HepG2 (cell line): ENCODE measurements at regions of chr18 and their contacts with region 1.

Region 1: GRCh38 chr18:2571200-2572143 is at the starts of genes METTL4 and NDC80:
- DNase-seq: peak; percentile 85
- ATAC-seq: peak; percentile 91
- H3K4me3 ChIP-seq: peak within 1 kb of the TSS; percentile 82 to 89 (median 83)
- H3K27ac ChIP-seq: peak within 1 kb of the TSS; percentile 99
- H3K4me1 ChIP-seq: peaks cover 23% of the 10 kb centered on the region
- H3K27me3 ChIP-seq: no peaks in the 10 kb centered on the region; a peak in 1 of 5 replicates
- CTCF ChIP-seq: peak; percentile 38; the same call in 1 of the 2 replicates
- EP300 ChIP-seq: no peak
- POLR2A ChIP-seq: peak; percentile 65 to 71; a peak in 3 of 4 replicates
- RAD21 ChIP-seq: no peak
- total RNA-seq, gene METTL4: 6.8 and 8.4 TPM in 2 replicates
- total RNA-seq, gene NDC80: 33.0 and 47.0 TPM in 2 replicates

Region 2: DNA sequence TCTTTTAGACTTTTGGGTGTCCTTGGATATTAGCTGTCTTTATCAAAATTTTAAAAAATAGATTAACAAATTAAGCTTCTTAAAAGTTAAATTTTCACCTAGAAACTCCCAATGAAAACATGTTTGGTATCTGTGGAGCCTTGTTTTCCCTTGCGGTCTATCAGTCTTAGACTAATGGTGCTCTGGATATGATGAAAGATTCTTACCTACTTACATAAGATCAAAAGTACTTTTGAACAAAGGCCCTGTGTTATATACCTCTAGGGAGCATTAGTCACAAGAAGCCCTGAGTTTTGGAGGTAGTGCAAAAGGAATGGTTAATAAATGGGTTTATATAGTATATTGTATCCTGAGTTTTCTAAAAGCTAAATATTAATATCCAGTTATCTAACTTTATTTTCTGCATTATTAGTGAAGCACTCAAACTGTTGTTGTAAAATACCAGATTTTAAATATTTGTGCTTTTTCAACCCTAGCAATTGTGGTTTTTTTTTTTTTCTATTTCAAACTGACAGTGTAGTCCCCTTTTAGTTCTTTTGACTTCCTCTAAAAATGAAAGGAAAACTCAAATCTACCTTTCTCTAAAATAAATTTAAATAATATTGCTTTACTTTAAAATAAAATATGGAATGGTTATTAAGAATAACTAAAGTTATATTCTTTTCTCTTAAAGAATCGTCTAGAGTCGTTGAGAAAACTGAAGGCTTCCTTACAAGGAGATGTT is 18.0 kb after region 1 on chr18:
- CTCF ChIA-PET with region 1: no interaction called
- POLR2A ChIA-PET with region 1: no interaction called
- in situ Hi-C with region 1: no loop called
- intact Hi-C with region 1: loop called (anchors 2 kb)
- DNase-seq: peak; percentile 78
- ATAC-seq: peak; percentile 82
- H3K4me3 ChIP-seq: no peak overlapping the region; a peak in 1 of 6 replicates
- H3K27ac ChIP-seq: peak overlapping the region; percentile 67
- H3K4me1 ChIP-seq: peaks cover 21% of the 10 kb centered on the region
- H3K27me3 ChIP-seq: no peaks in the 10 kb centered on the region
- CTCF ChIP-seq: no peak
- EP300 ChIP-seq: peak in 1 of 2 experiments; percentile 53; a peak in 2 of 4 replicates
- POLR2A ChIP-seq: no peak
- RAD21 ChIP-seq: no peak

Region 3: GRCh38 chr18:2655178-2655953 is 83.9 kb after region 1 on chr18 and contains the start of gene SMCHD1:
- CTCF ChIA-PET with region 1: no interaction called
- POLR2A ChIA-PET with region 1: interaction called, 4 read pairs
- in situ Hi-C with region 1: no loop called
- intact Hi-C with region 1: loop called (anchors 2 kb)
- DNase-seq: peak; percentile 59
- ATAC-seq: peak; percentile 81
- H3K4me3 ChIP-seq: peak within 1 kb of the TSS; percentile 88 to 91 (median 89)
- H3K27ac ChIP-seq: peak within 1 kb of the TSS; percentile 94
- H3K4me1 ChIP-seq: peaks cover 32% of the 10 kb centered on the region
- H3K27me3 ChIP-seq: no peaks in the 10 kb centered on the region; a peak in 1 of 5 replicates
- CTCF ChIP-seq: peak; percentile 9; the same call in 1 of the 2 replicates
- EP300 ChIP-seq: no peak
- POLR2A ChIP-seq: peak; percentile 84 to 92
- RAD21 ChIP-seq: peak; percentile 30
- total RNA-seq, gene SMCHD1: 93.6 and 110 TPM in 2 replicates